A549 (cell line): ENCODE measurements at regions of chr12 and their contacts with region 1.

Region 1: DNA sequence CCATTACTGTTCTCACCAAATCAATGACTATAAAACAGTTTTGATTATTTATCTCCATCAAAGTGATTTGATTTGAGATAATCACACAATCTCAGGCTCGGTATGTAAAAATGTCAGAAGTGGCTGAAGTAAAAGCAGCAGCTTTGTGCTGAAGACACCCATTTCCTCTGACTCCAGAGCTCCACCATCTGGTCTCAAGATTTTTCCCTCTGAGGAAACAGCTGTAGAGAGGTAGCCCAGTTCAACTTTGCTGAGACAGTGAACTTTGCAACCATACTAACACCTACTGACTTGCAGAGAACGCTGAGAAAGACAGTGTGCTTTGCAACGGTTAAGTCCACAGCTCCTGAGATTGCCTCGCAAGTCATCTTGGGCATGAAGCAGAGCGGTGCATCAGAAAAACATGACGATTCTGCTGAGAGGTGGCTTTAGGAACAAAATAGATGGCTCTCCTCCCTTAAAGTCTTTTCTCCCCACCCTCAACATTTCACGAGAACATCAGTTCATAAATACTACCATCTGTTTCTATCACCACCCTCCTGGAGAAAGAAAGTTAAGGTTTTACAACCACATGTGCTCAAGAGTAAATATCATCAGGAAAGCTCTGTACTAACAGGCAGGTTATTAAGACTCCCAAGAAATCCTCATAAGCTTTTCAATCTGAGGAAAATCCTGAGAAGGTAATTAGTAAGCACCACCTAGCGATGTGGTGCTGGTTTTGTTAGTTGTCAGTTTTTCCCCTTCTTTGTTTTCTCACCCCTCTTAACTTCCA is 34.8 kb downstream of the HIGD1C start:
- DNase-seq: peak in 1 of 2 experiments; percentile 60
- ATAC-seq: peak; percentile 87 to 92; a peak in 5 of 6 replicates
- H3K4me3 ChIP-seq: no peak overlapping the region
- H3K27ac ChIP-seq: no peak overlapping the region
- H3K4me1 ChIP-seq: no peaks in the 10 kb centered on the region
- CTCF ChIP-seq: peak; percentile 74
- EP300 ChIP-seq: no peak
- POLR2A ChIP-seq: no peak
- RAD21 ChIP-seq: peak; percentile 71 to 83

Region 2: DNA sequence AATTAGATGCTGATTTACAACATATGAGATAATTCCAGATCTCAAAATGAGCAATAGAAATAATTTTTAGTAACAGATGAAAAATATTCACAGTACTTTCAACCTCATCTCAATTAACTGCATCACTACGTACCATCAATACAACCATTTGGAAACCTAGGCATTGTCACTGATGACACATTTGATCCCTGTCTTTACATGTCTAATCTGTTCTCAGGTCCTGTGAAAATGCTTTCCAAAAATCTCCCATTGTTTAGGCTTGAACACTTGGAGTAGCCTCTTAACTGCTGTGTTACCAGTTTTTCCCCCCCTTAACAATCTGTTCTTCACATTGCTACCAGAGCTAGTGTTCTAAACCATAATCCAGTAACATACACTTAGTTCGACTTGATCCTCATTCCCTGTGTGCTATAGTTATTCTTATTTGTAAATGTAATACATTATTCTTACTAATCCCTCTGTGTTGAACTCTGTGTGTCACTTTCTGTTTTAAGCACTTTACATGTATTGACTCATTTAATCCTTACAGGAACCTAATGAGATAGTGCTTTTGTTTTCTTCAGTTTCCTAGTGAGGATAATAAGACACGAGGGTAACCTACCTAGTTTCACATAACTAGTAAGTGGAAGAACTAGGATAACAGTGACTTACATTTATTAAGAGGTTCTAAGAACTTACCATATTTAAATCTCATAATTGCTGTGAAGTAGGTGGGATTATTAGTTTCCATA is 544.8 kb before region 1 on chr12:
- CTCF ChIA-PET with region 1: no interaction called
- POLR2A ChIA-PET with region 1: no interaction called
- DNase-seq: no peak
- ATAC-seq: no peak
- H3K4me3 ChIP-seq: no peak overlapping the region
- H3K27ac ChIP-seq: no peak overlapping the region
- H3K4me1 ChIP-seq: no peaks in the 10 kb centered on the region
- CTCF ChIP-seq: no peak
- EP300 ChIP-seq: no peak
- POLR2A ChIP-seq: no peak
- RAD21 ChIP-seq: no peak

Region 3: DNA sequence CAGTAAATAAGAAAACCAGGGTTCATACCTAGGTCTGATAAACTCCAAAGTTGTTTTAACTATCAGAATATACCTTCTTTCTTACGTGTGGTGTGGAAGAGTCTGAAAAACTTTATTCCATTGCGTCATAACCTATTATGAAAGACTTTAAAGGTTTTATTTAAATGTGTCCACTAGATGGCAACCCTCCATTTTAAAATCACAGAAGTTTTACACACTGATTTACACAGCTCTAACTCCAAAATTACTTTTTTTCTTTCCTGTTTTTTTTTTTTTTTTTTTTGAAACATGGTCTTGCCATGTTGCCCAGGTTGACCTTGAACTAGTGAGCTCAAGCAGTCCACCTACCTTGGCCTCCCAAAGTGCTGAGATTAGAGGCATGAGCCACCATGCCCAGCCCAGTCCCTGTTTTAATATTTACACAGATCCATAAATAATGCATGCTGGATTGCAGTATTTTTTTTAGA is 161.7 kb before region 1 on chr12:
- CTCF ChIA-PET with region 1: interaction called, 72 read pairs
- POLR2A ChIA-PET with region 1: no interaction called
- DNase-seq: peak; percentile 25 to 72
- ATAC-seq: peak; percentile 72 to 75
- H3K4me3 ChIP-seq: no peak overlapping the region
- H3K27ac ChIP-seq: peak overlapping the region; percentile 2 to 59; a peak in 4 of 6 replicates
- H3K4me1 ChIP-seq: peaks cover 9% of the 10 kb centered on the region
- CTCF ChIP-seq: peak; percentile 85
- EP300 ChIP-seq: no peak
- POLR2A ChIP-seq: no peak
- RAD21 ChIP-seq: peak; percentile 74 to 76

Region 4: GRCh38 chr12:51000245-51000644 is 13.1 kb after region 1 on chr12:
- CTCF ChIA-PET with region 1: interaction called, 25 read pairs
- POLR2A ChIA-PET with region 1: no interaction called
- DNase-seq: peak in 1 of 2 experiments; percentile 33
- ATAC-seq: peak in 1 of 2 experiments; percentile 39; a peak in 1 of 6 replicates
- H3K4me3 ChIP-seq: no peak overlapping the region
- H3K27ac ChIP-seq: no peak overlapping the region
- H3K4me1 ChIP-seq: peaks cover 8% of the 10 kb centered on the region; the same call in 2 of the 3 replicates
- CTCF ChIP-seq: no peak
- EP300 ChIP-seq: no peak
- POLR2A ChIP-seq: no peak
- RAD21 ChIP-seq: no peak

Region 5: DNA sequence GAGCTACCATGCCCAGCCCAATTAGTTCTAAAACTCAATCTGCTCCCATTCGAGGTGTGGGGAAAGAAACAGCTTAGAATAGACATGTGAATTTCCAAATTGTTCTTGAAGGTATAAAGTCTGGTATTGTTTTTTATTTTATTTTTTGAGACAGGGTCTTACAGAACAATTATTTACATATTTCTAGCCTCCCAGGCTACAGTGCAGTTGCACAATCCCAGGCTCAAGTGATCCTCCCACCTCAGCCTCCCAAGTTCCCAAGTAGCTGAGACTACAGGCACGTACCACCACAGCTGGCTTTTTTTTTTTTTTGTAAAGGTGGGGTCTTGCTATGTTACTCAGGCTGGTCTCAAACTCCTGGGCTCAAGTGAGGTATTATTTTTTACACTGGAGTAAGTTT is 32.8 kb after region 1 on chr12:
- CTCF ChIA-PET with region 1: interaction called, 15 read pairs
- POLR2A ChIA-PET with region 1: no interaction called
- DNase-seq: no peak
- ATAC-seq: no peak
- H3K4me3 ChIP-seq: no peak overlapping the region
- H3K27ac ChIP-seq: no peak overlapping the region
- H3K4me1 ChIP-seq: peaks cover 23% of the 10 kb centered on the region
- CTCF ChIP-seq: no peak
- EP300 ChIP-seq: no peak
- POLR2A ChIP-seq: no peak
- RAD21 ChIP-seq: no peak